Dorsolateral prefrontal cortex (tissue), 120 donors: ENCODE measurements at regions of chr20 and their contacts with region 1.

Region 1: DNA sequence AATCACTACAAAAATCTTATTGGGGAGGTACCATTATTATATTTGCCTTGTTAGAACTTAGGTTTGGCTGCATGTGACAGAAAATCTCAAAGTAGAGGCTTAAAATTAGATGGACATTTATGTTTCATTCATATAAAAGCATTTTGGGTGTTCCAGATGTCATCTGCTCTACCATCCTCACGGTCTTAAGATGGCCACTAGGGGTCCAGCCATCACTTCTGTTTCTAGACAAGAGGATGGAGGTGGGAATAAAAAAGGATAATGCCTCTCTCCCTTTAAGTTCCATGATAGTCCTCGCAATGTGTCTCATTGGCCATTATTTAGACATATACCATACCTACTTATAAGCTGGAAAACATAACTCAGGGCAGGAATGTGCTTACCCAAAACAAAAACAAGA is 929.5 kb downstream of the KIF16B start:
- DNase-seq: no peak
- H3K4me3 ChIP-seq: no peak overlapping the region
- H3K27ac ChIP-seq: no peak overlapping the region
- H3K27me3 ChIP-seq: no peaks in the 10 kb centered on the region
- CTCF ChIP-seq: peak in 16 of 56 donors; percentile 12 to 30 (median 16)

Region 2: GRCh38 chr20:15380770-15381169 is 262.9 kb before region 1 on chr20:
- intact Hi-C with region 1: loop called in 1 of 2 experiments (anchors 10 kb)
- DNase-seq: no peak
- H3K4me3 ChIP-seq: no peak overlapping the region
- H3K27ac ChIP-seq: no peak overlapping the region
- H3K27me3 ChIP-seq: no peaks in the 10 kb centered on the region
- CTCF ChIP-seq: no peak

Region 3: DNA sequence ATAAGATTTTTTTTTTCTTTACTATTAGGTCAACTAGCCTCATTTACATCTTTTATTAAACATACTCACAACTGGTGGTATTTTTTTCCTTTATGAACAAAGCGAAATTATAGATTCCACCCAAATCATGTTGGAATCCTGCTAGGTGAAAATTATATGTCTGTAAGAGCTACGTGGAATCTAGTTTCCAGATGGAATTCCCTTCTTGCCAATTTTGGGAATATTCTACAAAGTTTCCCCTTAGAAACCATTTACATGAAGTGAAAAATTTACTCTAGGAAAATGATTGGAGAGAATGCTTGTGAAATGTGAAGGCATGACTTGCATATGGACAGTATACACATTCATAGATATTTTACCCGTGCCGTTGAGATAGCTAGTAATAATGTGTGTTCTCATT is 181.8 kb before region 1 on chr20:
- intact Hi-C with region 1: no loop called
- DNase-seq: no peak
- H3K4me3 ChIP-seq: no peak overlapping the region
- H3K27ac ChIP-seq: no peak overlapping the region
- H3K27me3 ChIP-seq: no peaks in the 10 kb centered on the region
- CTCF ChIP-seq: no peak

Region 4: GRCh38 chr20:15756002-15756753 is 112.5 kb after region 1 on chr20:
- intact Hi-C with region 1: no loop called
- DNase-seq: no peak
- H3K4me3 ChIP-seq: peak overlapping the region in 26 of 59 donors; percentile 0 to 36 (median 12)
- H3K27ac ChIP-seq: peak overlapping the region in 5 of 59 donors; percentile 1 to 18 (median 10)
- H3K27me3 ChIP-seq: no peaks in the 10 kb centered on the region
- CTCF ChIP-seq: no peak

Region 5: DNA sequence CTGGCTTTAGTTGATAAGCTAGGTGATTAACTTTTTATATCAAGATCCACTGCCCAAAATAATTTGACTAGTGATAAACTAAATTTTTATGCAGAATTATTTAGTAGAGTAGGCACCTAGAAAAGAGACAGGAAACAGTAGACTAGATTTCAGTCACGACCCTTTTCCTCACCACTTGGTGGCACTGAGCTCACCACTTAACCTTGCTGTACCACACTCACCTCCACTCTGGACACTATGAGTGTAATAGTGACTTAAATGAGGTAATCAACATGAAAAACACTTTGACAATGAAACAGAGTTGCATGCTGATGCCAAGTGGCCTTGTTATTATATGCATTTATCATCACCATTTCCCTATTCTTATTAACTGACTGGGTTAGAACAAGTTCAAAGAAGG is 199.2 kb after region 1 on chr20:
- intact Hi-C with region 1: no loop called
- DNase-seq: no peak
- H3K4me3 ChIP-seq: no peak overlapping the region
- H3K27ac ChIP-seq: no peak overlapping the region
- H3K27me3 ChIP-seq: no peaks in the 10 kb centered on the region
- CTCF ChIP-seq: peak in 1 of 56 donors; percentile 10

Region 6: GRCh38 chr20:16392346-16392745 is 748.6 kb after region 1 on chr20:
- intact Hi-C with region 1: no loop called
- DNase-seq: no peak
- H3K4me3 ChIP-seq: no peak overlapping the region
- H3K27ac ChIP-seq: no peak overlapping the region
- H3K27me3 ChIP-seq: no peaks in the 10 kb centered on the region
- CTCF ChIP-seq: no peak